HEK293T (cell line): ENCODE measurements at regions of chr2 and their contacts with region 1.

Region 1: GRCh38 chr2:11778923-11779757 is 32.7 kb downstream of the LPIN1 start:
- DNase-seq: peak; percentile 86

Region 2: DNA sequence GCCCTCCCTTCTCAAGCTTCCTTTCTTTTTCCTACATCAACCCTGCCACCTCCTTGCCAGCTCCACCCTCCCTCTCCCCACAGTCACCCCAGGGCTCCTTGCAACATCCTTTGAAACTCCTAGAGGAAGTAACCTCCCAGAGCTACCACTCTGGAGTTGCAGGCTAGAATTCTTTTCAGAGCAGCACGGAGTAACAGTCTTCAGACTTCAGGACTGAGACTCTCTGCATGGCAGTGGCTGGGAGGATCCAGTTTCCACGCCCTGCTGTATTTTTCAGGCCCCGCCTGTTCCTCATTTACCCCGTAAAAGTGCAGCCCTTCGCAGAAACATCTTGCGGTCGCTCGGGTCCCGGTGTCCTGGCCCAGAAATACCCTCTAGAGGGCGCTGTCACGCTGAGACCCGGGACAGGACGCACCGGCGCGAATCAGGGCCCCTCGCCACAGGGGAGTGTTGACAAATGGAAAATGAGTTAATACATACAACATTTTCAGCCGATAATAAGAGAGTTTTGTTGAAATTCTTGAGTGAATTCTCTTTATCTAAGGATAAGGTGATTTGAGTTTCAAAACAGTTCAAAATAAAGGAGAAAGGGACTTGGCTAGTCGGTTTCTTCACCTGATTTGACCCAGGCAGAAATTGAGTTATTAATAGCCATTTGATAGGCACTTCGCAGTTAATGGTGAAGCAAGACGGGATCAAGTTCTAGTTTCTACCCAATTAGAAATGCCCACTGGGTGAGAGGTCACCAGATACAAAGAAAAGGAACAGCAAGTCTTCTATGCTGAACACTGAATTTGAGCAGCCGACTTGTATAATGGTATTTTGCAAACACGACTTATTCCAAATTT is 90.7 kb before region 1 on chr2:
- CTCF ChIA-PET with region 1: interaction called, 26 read pairs
- POLR2A ChIA-PET with region 1: no interaction called
- DNase-seq: peak; percentile 86

Region 3: DNA sequence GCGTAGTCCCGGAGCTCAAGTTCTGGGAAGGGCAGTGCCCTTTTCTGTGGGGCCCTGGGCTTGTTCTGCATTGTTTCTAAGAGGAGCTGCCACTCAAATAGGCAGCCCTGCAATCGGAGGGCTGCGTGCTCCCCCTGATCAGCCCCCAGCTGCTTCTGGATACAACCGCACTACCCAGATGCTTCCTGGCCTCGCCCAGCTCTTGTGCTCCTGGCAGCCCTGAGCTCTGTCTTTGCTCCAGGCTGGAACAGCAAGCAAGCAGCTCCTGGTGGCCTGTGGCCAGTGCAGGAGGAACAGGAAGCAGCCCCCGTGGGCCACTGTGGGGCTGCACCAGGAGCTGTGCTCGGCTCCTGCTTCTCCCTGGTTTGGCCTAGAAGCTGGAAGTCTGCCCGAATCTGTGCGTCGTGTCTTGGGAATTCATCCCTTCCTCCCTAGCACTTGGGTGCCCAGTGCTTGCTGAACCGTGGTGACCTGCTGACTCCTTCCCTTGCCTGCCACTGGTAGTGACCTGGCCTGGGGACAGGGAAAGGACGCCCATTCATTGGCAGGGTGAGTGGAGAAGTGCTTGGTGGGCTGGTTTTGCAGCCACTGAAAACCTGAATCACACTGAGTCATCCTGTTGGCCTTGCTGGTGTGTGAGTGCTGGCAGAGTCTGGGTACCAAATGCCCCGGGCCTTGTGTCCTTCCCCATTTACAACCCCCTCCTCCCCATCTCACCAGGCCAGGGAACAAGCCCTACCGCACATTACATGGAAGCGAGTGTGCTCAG is 81.9 kb before region 1 on chr2:
- CTCF ChIA-PET with region 1: interaction called, 11 read pairs
- POLR2A ChIA-PET with region 1: no interaction called
- DNase-seq: no peak